ENCODE measurements at regions of chr22 and their contacts with region 1.

Region 1: DNA sequence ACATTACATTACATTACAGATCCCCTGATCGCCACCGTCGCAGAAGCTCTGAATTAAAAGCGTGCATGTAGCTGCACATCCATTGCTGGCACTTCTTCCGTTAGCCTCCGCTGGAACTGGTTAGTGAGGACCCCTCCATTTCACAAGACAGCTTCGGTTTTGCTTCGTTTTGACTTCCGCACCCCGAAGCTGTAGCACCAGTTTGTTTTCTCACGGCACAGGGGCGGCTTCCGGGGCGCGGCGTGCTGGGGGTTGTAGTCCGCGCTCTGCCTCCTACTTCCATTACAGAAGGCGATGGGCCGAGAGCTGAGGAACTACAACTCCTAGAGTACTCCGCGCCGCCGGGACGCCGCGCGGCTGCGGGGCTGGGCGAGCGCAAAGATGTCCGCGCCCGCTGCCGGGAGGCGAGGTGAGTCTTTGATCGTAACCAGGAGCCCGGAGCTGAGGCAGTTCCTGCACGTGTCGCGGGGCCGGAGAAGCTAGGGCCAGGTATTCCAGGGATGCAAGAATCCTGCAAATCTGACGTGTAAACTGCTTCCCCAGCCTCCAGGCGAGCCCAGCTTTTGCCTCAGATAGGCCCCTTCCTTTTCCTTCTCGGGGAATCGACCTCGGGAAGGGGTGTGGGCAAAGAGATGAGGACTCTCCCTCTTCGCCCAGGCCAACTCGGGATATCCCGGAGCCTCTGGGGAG is at the start of gene PEX26:
- DNase-seq: peak; percentile 93 to 99 (median 97)

Region 2: DNA sequence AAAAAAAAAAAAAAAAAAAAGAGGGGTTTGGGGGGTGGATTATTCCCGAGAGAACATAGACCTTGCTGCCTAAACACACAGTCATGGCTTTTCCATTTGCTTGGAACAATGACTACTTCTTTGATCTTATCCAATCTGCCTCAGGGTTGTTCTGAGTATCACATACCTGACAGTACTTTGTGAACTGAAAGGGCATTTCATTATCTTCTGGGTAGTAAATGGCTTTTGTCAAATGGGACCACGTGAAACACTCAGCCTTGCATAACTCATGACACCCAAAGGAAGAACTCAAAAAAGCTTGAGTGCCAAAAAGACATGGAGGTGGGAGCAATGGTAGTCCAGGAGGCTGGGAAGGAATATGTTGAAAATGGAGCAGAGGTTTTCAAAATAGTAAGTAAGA is 180.4 kb before region 1 on chr22:
- intact Hi-C with region 1: loop called (anchors 5 kb)
- DNase-seq: no peak

Region 3: GRCh38 chr22:18001040-18001893 is 76.5 kb before region 1 on chr22:
- intact Hi-C with region 1: loop called (anchors 5 kb)
- DNase-seq: peak; percentile 82 to 97 (median 91)

Region 4: GRCh38 chr22:18024276-18024947 is 53.4 kb before region 1 on chr22 and contains the start of gene MICAL3:
- intact Hi-C with region 1: loop called (anchors 10 kb)
- DNase-seq: peak; percentile 24 to 90 (median 81)

Measured in head of caudate nucleus (tissue), 42 donors.